ENCODE measurements at regions of chr22 and their contacts with region 1.

Region 1: DNA sequence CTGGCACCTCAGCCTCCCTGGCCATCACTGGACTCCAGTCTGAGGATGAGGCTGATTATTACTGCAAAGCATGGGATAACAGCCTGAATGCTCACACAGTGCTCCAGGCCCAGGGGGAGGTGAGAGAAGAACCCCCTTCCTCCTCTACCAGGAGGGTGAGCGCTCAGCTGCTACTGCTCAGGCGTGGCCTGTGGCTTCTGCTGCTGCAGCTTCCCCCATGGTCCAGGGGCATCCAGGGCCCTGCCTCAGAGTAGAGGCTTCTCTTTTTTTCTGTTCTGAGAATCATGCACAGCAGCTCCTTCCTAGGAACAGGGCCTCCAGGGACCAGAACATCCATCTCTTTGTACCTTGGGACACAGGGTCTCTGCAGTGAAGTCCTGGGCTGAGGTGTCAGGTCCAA is 83.1 kb downstream of the VPREB1 start:
- DNase-seq: no peak
- H3K4me3 Mint-ChIP-seq: no peak overlapping the region
- H3K27ac Mint-ChIP-seq: no peak overlapping the region
- H3K4me1 Mint-ChIP-seq: no peaks in the 10 kb centered on the region
- H3K27me3 Mint-ChIP-seq: peaks cover 71% of the 10 kb centered on the region
- CTCF ChIP-seq: no peak

Region 2: DNA sequence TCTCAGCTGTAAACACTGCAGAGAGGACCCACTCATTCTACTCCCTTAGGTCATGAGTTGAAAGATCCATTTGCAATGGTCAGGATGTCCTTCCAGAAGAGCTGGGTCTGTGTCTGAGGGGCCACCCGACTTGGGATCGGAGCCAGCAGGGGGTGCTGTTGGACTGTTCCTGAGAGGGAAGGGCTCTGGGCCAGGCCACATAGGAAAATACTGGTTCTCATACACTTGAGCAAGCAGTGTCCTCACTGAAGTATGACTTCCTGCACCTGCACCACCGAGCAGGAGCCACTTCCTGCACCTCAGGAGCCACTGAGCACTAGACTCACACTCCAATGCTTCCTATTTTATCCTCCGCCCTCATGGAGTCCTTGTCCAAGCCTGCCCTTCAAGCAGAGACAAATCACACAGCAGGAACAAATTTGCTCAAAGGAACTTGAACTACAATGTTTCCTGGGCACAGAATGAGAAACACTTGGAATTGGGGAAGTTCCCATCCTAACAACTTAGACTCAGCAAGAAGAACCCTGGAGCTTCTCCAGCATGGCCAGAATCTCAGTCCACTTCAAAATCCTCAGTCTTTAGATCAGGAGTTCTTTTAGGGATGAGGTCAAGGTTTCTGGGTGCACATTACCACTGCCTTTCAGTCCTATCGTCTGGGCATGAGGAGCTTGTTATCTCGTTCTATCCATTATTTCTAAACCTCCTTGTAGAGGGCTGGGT is 119.7 kb before region 1 on chr22:
- CTCF ChIA-PET with region 1: no interaction called
- POLR2A ChIA-PET with region 1: interaction called, 3 read pairs
- intact Hi-C with region 1: loop called (anchors 1 kb)
- DNase-seq: peak; percentile 81
- H3K4me3 Mint-ChIP-seq: no peak overlapping the region
- H3K27ac Mint-ChIP-seq: no peak overlapping the region
- H3K4me1 Mint-ChIP-seq: peaks cover 18% of the 10 kb centered on the region
- H3K27me3 Mint-ChIP-seq: no peaks in the 10 kb centered on the region
- CTCF ChIP-seq: peak; percentile 76

Region 3: DNA sequence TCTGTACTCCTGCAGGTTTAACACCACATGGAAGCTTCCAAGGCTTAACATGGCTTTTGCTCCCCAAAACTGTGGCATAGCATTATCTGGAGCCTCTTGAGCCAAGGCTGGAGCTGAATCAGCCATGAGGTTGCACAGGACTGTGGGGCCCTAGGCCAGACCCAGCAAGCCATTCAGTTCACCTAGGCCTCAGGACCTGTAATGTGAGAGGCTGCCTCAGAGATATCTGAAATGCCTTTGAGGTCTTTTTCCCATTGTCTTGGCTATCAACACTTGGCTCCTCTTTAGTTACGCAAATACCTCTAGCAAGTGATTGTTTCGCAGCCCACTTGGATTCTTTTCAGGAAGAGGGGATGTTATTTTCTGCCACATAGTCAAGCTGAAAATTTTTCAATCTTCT is 11.1 kb before region 1 on chr22:
- CTCF ChIA-PET with region 1: interaction called, 12 read pairs
- POLR2A ChIA-PET with region 1: no interaction called
- intact Hi-C with region 1: no loop called
- DNase-seq: no peak
- H3K4me3 Mint-ChIP-seq: no peak overlapping the region
- H3K27ac Mint-ChIP-seq: no peak overlapping the region
- H3K4me1 Mint-ChIP-seq: no peaks in the 10 kb centered on the region
- H3K27me3 Mint-ChIP-seq: no peaks in the 10 kb centered on the region
- CTCF ChIP-seq: no peak

Region 4: GRCh38 chr22:22342697-22343580 is 15.2 kb after region 1 on chr22:
- CTCF ChIA-PET with region 1: interaction called, 10 read pairs
- POLR2A ChIA-PET with region 1: interaction called, 5 read pairs
- intact Hi-C with region 1: no loop called
- DNase-seq: peak; percentile 82
- H3K4me3 Mint-ChIP-seq: no peak overlapping the region
- H3K27ac Mint-ChIP-seq: no peak overlapping the region
- H3K4me1 Mint-ChIP-seq: no peaks in the 10 kb centered on the region
- H3K27me3 Mint-ChIP-seq: peaks cover 63% of the 10 kb centered on the region
- CTCF ChIP-seq: peak; percentile 88

Measured in MCF 10A (cell line).